HepG2 (cell line): ENCODE measurements at regions of chr5 and their contacts with region 1.

Region 1: DNA sequence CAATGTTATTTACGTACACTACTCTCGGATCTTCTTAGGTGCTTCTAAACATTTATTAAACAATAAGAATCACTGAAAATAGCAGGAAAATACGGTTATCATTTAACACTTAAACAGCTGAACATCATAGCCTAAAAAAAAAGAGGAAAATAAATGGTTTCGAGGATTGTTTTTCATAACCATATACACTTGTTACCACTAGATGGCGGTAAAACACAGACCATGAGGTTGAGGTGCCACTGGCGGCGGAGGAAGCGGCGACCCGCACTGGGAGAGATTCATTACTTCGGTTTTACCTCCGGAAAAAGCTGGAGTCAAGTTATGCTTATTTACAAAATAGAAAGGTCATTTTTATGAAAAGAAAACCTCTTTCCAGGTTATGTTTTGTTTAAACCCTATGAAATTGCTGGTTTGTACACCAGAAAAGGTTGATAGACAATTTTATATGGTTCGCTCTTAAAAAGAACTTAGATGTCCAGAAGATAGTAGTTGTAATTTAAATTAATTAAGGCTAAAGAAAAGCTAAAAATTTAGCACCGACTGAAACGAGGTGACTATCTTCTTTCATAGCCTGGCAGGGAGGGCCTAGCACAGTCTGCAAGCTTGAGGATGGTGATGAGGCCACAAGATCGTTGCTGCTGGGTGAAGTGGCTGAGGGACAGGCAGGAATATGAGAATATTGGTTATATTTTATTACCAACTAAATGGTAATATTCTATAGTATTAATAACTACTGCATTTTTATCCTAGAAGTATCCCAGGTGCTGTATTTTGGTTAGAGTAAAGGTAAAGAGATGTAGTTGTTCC is 605.7 kb downstream of the RAB3C start:
- DNase-seq: peak; percentile 58
- ATAC-seq: peak; percentile 85
- H3K4me3 ChIP-seq: peak overlapping the region in 2 of 3 experiments; percentile 53 to 55; a peak in 4 of 6 replicates
- H3K27ac ChIP-seq: no peak overlapping the region
- H3K4me1 ChIP-seq: no peaks in the 10 kb centered on the region; the same call in 1 of the 2 replicates
- H3K27me3 ChIP-seq: no peaks in the 10 kb centered on the region
- CTCF ChIP-seq: peak; percentile 86
- EP300 ChIP-seq: no peak
- POLR2A ChIP-seq: no peak
- RAD21 ChIP-seq: peak; percentile 76

Region 2: DNA sequence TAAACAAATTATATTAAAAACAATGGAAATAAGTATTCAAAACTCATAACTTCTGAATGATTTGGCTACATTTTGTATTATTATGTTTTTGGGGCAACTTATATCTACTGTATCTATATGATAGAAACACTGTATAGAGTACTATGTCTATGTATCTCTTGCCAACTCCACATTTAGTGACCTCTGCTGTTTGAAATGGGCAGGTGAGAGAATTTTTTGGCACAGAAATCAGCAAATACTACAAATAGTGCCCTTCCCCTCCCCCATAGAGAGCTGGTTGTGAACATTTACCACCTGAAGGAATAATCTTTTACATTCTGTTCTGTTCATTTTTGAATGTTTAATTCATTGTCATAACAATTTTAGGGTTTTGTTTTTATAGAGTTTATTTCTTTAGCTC is 159.6 kb after region 1 on chr5:
- CTCF ChIA-PET with region 1: interaction called, 4 read pairs
- POLR2A ChIA-PET with region 1: no interaction called
- in situ Hi-C with region 1: no loop called
- intact Hi-C with region 1: loop called (anchors 1 kb)
- DNase-seq: peak; percentile 36
- ATAC-seq: peak; percentile 60; the same call in 2 of the 3 replicates
- H3K4me3 ChIP-seq: no peak overlapping the region
- H3K27ac ChIP-seq: no peak overlapping the region
- H3K4me1 ChIP-seq: no peaks in the 10 kb centered on the region
- H3K27me3 ChIP-seq: no peaks in the 10 kb centered on the region
- CTCF ChIP-seq: peak; percentile 42
- EP300 ChIP-seq: no peak
- POLR2A ChIP-seq: no peak
- RAD21 ChIP-seq: no peak

Region 3: DNA sequence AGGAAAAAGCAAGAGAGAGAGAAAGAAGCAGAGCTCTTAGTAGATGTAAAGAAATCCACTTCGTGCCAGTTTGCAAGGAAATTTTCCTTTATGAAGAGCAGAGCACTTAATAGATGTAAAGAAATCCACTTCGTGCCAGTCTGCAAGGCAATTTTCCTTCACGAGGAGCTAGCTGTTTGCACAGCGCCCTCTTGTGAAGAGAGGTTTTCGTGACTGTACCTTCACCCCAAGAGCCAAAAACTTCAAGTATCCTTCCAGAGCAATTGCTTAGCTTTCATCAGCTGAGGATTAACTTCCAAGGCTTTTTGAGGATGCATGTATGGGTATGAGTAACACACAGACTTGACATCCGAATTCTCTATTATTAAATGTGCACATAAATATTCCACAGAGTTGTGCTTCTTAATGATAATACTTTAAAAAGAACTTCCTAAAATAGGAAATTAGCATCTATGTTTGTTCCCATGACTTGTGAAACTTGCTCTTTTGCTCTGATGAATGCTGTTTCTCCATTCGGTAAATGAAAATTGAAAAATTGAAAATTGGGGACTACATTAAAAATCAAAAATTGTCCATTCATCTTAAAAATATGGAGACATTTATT is 179.3 kb after region 1 on chr5:
- CTCF ChIA-PET with region 1: interaction called, 23 read pairs
- POLR2A ChIA-PET with region 1: no interaction called
- in situ Hi-C with region 1: loop called (anchors 5 kb)
- intact Hi-C with region 1: loop called (anchors 1 kb)
- DNase-seq: peak; percentile 30
- ATAC-seq: peak; percentile 63
- H3K4me3 ChIP-seq: no peak overlapping the region
- H3K27ac ChIP-seq: no peak overlapping the region
- H3K4me1 ChIP-seq: no peaks in the 10 kb centered on the region
- H3K27me3 ChIP-seq: no peaks in the 10 kb centered on the region
- CTCF ChIP-seq: peak; percentile 79
- EP300 ChIP-seq: no peak
- POLR2A ChIP-seq: no peak
- RAD21 ChIP-seq: no peak

Region 4: DNA sequence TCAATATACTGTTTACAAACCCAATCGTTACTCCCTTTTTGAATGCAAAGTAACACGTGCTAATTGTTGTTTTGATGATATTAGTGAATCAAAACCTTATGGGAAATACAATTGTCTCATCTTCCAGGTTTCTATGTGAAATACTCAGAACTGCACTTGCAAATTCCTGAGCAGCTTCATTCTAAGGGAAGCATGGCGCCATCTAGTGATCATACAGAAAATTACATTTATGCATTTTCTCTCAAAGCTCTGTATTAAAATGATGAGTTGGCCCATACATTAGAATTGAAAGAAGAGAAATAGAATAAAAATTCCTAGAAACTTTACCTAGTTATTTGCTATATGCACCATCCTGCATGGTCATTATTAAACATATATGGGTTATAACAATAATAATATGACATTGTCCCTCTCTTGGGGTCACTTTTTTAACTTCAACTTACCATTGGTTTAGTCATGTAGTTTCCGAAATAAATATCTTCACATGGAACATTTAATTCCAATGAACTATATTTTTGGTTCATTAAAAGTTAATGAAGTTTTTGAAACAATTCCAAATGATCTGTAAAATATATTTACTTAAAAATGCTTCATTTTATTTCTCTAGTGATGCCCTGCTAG is 484.9 kb after region 1 on chr5:
- CTCF ChIA-PET with region 1: no interaction called
- POLR2A ChIA-PET with region 1: no interaction called
- in situ Hi-C with region 1: no loop called
- intact Hi-C with region 1: loop called (anchors 5 kb)
- DNase-seq: peak; percentile 16
- ATAC-seq: no peak
- H3K4me3 ChIP-seq: no peak overlapping the region
- H3K27ac ChIP-seq: no peak overlapping the region
- H3K4me1 ChIP-seq: no peaks in the 10 kb centered on the region
- H3K27me3 ChIP-seq: no peaks in the 10 kb centered on the region; a peak in 1 of 5 replicates
- CTCF ChIP-seq: peak; percentile 59
- EP300 ChIP-seq: no peak
- POLR2A ChIP-seq: no peak
- RAD21 ChIP-seq: no peak

Region 5: DNA sequence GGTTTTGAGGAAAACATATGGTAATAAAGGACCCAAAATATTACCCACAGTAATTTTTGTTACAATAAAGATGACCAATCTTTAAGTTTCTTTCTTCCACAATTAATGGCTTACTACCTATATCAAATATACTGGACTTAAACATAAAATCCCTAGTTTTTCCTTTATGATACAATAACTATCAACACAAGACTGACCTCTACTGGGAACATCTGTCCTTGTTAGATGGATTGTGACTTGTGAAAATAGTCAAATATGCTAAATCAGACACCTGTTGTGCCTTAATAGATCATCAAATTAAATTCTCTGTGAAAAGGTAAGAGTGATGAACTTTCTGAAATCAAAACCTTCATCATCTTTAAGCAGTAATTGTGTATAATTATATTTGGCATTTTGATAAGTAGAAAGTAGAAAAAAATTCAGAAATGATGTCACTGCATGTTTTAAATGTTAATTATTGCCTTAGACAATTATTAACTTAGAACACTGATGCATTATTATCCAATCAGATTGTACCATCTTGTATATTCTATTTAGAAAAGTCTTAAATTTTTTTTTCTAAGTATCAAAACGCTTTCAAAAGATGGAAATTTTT is 1397.8 kb after region 1 on chr5:
- CTCF ChIA-PET with region 1: no interaction called
- POLR2A ChIA-PET with region 1: no interaction called
- in situ Hi-C with region 1: no loop called
- intact Hi-C with region 1: loop called (anchors 10 kb)
- DNase-seq: peak; percentile 54
- ATAC-seq: 0 out of 3 replicates have a peak, but pooled peaks have one; percentile 30
- H3K4me3 ChIP-seq: no peak overlapping the region
- H3K27ac ChIP-seq: no peak overlapping the region
- H3K4me1 ChIP-seq: peaks cover 12% of the 10 kb centered on the region; the same call in 1 of the 2 replicates
- H3K27me3 ChIP-seq: no peaks in the 10 kb centered on the region
- CTCF ChIP-seq: peak; percentile 67
- EP300 ChIP-seq: no peak
- POLR2A ChIP-seq: no peak
- RAD21 ChIP-seq: peak; percentile 62